ENCODE measurements at regions of chrX and their contacts with region 1.

Region 1: GRCh38 chrX:40097497-40098263 is at the start of gene BCOR:
- DNase-seq: peak; percentile 61 to 71
- ATAC-seq: peak; percentile 50 to 51
- H3K4me3 ChIP-seq: peak within 1 kb of the TSS; percentile 64 to 94 (median 82)
- H3K27ac ChIP-seq: peak within 1 kb of the TSS; percentile 88 to 93 (median 91)
- H3K4me1 ChIP-seq: peaks cover 3 to 13% of the 10 kb centered on the region in 2 donors
- H3K27me3 ChIP-seq: peaks cover 0 to 27% (median 16%) of the 10 kb centered on the region in 3 donors
- CTCF ChIP-seq: no peak
- POLR2A ChIP-seq: peak; percentile 85 to 88
- total RNA-seq, gene BCOR: 6.5 to 43.8 (median 18.4) TPM

Region 2: DNA sequence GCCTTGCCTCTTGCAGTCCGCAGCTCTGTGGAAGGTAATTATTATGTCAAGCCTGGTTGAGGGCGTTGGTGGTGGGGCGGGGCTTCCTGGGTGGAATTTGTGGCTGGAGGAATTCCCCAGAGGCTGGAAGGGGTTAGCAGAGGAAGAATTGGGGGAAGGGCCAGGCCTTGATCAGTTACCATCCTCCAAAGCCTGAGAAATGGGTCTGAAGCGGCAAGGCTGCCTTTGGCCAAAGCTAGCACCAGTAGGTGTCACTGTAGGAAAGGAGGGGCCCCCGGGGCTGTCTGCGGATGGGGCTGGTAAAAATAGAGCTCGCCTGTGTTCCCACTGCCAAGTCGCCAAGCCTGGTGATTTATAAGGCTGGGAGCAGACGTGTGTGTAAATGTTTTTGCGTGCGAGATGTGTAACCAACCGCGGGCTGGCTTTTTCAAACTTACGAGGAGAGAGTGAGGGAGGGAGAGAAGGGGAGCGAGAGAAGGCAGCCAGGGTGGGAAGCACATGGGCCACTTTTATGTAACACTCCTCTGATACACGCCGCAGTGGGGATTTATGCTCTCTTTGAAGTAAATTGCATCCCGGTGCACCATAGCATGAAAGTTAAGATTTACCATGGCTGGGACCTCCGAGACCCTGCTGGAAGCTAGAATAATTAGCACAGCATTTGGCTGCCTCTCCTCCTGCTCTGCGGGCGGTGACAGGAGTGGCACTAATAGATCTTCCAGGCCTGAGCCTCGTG is 366.9 kb before region 1 on chrX:
- in situ Hi-C with region 1: no loop called
- intact Hi-C with region 1: loop called (anchors 10 kb)
- DNase-seq: peak; percentile 52 to 68
- ATAC-seq: peak; percentile 91
- H3K4me3 ChIP-seq: no peak overlapping the region
- H3K27ac ChIP-seq: peak overlapping the region in 1 of 4 donors; percentile 24
- H3K4me1 ChIP-seq: peaks cover 3 to 7% of the 10 kb centered on the region in 2 donors
- H3K27me3 ChIP-seq: peaks cover 0 to 3% (median 0%) of the 10 kb centered on the region in 3 donors
- CTCF ChIP-seq: peak; percentile 38 to 72 (median 47)
- POLR2A ChIP-seq: no peak

Region 3: GRCh38 chrX:39907964-39908616 is 189.6 kb before region 1 on chrX:
- in situ Hi-C with region 1: no loop called
- intact Hi-C with region 1: loop called (anchors 5 kb)
- DNase-seq: peak; percentile 49 to 72
- ATAC-seq: peak; percentile 93 to 97
- H3K4me3 ChIP-seq: peak overlapping the region in 1 of 4 donors; percentile 28
- H3K27ac ChIP-seq: peak overlapping the region; percentile 54 to 76 (median 70)
- H3K4me1 ChIP-seq: peaks cover 0 to 18% of the 10 kb centered on the region in 2 donors
- H3K27me3 ChIP-seq: no peaks in the 10 kb centered on the region
- CTCF ChIP-seq: no peak
- POLR2A ChIP-seq: no peak

Region 4: DNA sequence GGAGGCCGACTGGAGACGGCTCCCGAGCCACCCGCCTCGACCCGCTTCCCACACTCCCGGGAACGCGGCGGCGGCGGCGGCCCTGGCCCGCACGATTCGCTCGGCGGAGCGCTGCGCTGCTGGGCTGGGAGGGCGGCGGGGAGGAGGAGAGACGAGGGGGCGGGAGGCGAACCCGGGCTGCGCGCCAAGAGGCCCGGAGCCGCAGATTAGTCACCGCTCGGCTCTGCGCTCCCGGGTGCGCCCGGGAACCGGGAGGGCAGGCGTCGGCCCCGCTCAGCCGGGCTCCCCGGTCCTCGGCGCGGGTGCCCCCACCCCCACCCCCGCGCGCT is 11.2 kb after region 1 on chrX:
- in situ Hi-C with region 1: no loop called
- intact Hi-C with region 1: loop called (anchors 2 kb)
- DNase-seq: peak; percentile 71 to 82
- ATAC-seq: peak; percentile 37 to 43
- H3K4me3 ChIP-seq: peak overlapping the region; percentile 53 to 79 (median 66)
- H3K27ac ChIP-seq: peak overlapping the region; percentile 86 to 95 (median 92)
- H3K4me1 ChIP-seq: peaks cover 6 to 12% of the 10 kb centered on the region in 2 donors
- H3K27me3 ChIP-seq: peaks cover 0 to 15% (median 10%) of the 10 kb centered on the region in 3 donors
- CTCF ChIP-seq: no peak
- POLR2A ChIP-seq: peak; percentile 74 to 78

Region 5: DNA sequence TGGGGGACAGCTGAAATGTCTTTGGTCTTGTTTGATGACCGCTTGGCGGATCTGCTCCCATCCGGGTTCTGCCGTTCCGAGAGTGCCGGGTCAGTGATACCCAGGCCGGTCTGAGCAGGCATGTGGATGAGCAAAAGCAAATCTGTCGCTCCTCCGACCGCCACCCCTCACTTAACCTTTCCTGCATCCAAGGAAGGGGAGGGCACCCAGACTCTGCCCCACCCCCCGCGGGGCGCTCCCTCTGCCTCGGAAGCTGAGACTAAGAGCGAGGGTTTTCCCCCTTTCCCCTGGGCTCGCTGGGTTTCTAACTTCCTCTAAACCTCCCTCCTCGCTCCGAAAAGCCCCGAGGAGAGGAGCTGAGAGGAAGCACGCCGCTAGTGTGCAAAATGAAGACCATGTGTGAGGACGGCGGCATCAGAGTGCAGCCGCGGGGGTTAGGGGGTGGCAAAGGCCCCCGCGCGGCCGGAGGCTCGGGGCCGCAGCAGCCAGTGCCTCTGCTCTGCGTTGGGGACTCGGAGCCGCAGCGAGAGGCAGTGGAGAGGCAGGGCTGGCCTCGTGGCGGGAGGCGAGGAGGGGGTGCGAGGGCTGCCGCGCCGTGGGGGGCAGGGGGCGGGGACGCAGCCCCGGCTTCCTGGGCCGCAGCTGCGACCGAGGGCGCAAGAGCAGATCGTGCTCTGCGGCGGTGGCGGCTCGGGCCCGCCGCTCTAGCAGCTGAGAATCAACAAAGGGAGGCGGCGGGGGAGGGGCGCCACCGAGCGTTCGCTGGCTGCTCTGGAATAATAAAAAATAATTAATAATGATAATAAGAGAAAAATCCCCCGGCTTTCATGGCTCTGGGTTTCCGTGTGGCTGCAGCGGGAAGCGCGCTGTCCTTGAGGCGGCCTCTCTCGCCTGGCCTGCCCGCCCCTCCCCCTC is 55.9 kb after region 1 on chrX:
- in situ Hi-C with region 1: loop called in 1 of 4 experiments (anchors 10 kb)
- intact Hi-C with region 1: loop called (anchors 2 kb)
- DNase-seq: peak in 1 of 2 donors; percentile 30
- ATAC-seq: peak; percentile 6 to 20
- H3K4me3 ChIP-seq: peak overlapping the region; percentile 50 to 63 (median 60)
- H3K27ac ChIP-seq: peak overlapping the region; percentile 77 to 86 (median 82)
- H3K4me1 ChIP-seq: peaks cover 4 to 18% of the 10 kb centered on the region in 2 donors
- H3K27me3 ChIP-seq: peaks cover 0 to 22% (median 5%) of the 10 kb centered on the region in 3 donors
- CTCF ChIP-seq: peak in 1 of 5 experiments; percentile 20
- POLR2A ChIP-seq: no peak

Region 6: DNA sequence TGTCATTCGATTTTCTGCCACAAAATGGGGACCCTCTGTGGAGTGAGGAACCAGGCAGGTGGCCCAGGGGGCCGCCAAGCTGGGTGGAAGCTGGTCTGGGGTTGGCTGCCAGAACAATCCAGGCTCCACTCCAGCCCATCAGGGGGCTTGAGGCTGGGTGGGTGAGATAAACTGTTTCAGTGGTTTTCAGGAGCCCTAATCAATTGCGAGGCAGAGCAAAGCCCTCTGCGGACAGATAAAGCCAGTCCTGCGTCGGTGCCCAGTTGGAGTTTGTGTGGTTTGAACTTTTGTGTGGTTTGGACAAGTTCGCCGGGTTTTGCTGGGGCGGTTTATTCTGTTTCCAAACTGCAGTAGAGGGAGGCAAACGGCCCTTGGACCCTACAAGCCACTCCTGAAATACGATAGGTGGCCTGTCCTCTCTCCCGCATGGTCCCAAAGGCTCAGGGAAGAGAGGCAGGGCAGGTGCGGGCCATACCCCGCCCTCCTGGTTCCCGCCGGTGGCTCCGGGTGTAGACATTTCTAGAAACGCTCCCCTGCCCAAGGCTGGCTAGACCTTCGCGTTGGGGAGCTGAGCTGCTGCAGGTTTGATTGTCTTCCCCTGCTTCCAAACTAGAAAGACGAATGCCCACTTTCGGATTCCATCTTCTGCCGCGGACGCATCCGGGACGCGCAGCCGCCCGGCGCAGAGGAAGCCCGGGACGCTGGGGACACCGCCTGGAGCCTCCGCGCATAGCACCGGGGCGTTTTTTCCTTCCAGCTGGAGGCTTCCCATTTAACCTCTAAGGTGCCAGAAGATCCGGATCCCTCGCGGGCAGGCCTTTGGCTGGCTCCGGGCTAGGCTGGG is 169.0 kb after region 1 on chrX:
- in situ Hi-C with region 1: no loop called
- intact Hi-C with region 1: loop called (anchors 10 kb)
- DNase-seq: peak; percentile 11 to 35
- ATAC-seq: peak; percentile 78 to 82
- H3K4me3 ChIP-seq: peak overlapping the region; percentile 49 to 59 (median 52)
- H3K27ac ChIP-seq: peak overlapping the region; percentile 6 to 60 (median 54)
- H3K4me1 ChIP-seq: no peaks in the 10 kb centered on the region
- H3K27me3 ChIP-seq: no peaks in the 10 kb centered on the region
- CTCF ChIP-seq: peak; percentile 36 to 68 (median 65)
- POLR2A ChIP-seq: no peak

Region 7: GRCh38 chrX:41145920-41146608 is 1048.4 kb after region 1 on chrX:
- in situ Hi-C with region 1: no loop called
- intact Hi-C with region 1: no loop called
- DNase-seq: no peak
- ATAC-seq: no peak
- H3K4me3 ChIP-seq: no peak overlapping the region
- H3K27ac ChIP-seq: no peak overlapping the region
- H3K4me1 ChIP-seq: no peaks in the 10 kb centered on the region
- H3K27me3 ChIP-seq: no peaks in the 10 kb centered on the region
- CTCF ChIP-seq: no peak
- POLR2A ChIP-seq: no peak

Measured in gastrocnemius medialis (tissue), 4 donors.